ENCODE measurements at regions of chr1 and their contacts with region 1.

Region 1: DNA sequence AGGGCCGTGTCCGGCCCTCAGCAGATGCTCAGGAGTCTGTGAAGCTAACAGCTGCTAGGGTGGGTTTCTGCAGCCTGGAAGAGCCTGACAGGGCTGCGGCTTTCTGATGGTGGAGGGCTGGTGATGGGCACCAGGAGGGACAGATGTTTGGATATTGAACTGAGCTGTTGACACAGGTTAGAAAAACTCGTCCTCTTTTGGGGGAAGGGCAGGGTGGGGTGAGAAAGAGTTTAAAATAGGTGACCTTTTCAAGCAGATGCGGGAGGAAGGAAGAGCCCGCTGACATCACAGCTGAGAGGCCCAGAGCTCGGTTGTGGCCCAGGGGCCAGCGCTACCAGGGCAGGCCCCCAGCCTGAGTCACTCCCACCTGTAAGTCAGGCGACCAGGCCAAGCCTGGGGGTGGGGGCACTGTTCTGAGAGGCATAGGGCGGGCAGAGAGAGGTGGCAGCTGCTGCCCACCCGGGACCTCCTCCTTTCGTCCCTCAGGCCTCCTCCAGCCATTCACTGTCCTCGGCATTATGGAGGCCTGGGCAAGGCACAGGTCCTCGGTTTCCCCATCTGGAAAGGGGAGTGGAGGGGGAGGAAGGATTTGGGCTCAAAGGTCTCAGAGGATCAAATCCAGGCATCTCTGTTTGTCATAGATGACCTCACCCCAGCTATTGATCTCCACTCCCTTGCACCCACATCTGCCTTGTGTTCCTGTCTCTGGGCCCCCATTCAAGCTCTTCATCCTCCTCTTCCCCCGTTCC is 32.3 kb upstream of the ID3 start:
- DNase-seq: peak; percentile 88
- H3K4me3 Mint-ChIP-seq: peak overlapping the region; percentile 34
- H3K27ac Mint-ChIP-seq: peak overlapping the region; percentile 85
- H3K4me1 Mint-ChIP-seq: peaks cover 68% of the 10 kb centered on the region
- H3K27me3 Mint-ChIP-seq: no peaks in the 10 kb centered on the region

Region 2: GRCh38 chr1:23577056-23578004 is 14.3 kb before region 1 on chr1:
- CTCF ChIA-PET with region 1: interaction called, 6 read pairs
- intact Hi-C with region 1: loop called (anchors 1 kb)
- DNase-seq: peak; percentile 77
- H3K4me3 Mint-ChIP-seq: peak overlapping the region; percentile 32
- H3K27ac Mint-ChIP-seq: peak overlapping the region; percentile 78
- H3K4me1 Mint-ChIP-seq: peaks cover 29% of the 10 kb centered on the region
- H3K27me3 Mint-ChIP-seq: no peaks in the 10 kb centered on the region

Region 3: DNA sequence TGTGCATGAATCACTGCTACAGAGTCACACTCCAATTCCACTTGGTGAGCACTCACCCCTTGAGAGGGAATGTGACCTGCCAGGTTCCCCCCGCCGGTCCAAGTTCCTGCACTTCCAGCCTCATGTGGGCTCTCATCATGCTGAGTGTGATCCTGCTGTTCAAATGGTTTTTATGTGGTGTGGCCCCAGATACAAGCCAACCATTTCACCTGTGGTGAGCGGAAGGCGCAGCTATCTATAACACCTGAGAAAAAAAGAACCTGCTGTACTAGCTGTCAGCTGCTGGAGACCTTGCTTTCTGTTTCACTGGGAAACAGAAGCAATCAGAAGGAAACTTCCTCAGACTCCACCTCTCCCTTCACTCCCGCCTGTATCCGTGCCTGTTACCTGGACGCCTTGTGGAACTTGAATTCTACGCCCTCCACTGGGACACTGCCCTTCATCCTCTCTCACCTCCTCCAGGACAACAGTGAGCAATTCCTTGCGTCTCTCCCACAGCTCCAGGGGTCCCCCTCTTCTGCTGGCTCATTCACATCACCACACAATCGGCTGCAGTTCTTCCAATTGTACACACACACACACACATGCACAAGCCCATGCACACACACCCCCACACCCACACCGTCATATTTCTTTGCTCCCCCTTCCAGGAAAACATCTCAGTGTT is 35.6 kb after region 1 on chr1:
- CTCF ChIA-PET with region 1: interaction called, 3 read pairs
- intact Hi-C with region 1: loop called (anchors 2 kb)
- DNase-seq: peak; percentile 63
- H3K4me3 Mint-ChIP-seq: peak overlapping the region; percentile 82
- H3K27ac Mint-ChIP-seq: peak overlapping the region; percentile 83
- H3K4me1 Mint-ChIP-seq: peaks cover 53% of the 10 kb centered on the region
- H3K27me3 Mint-ChIP-seq: no peaks in the 10 kb centered on the region

Region 4: DNA sequence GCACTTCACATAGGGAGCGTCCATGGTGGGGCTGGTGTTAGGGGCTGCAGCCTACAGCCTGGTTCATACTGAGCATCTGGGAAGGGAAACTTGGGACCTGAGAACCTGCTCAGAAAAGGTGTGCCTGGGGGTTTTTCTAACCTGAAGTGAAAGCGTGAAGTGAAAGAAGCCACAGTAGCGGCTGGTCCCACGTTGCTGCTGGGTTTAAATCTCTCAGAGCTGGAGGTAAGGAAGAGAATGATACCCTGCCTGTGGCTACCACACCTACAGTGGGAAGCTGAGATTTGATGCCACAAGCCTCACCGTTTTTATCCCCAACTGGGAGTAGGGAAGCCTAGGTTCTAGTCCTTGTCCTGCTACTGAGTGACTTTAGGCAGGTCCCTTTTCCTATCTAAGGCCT is 297.4 kb after region 1 on chr1:
- CTCF ChIA-PET with region 1: no interaction called
- intact Hi-C with region 1: no loop called
- DNase-seq: no peak
- H3K4me3 Mint-ChIP-seq: no peak overlapping the region
- H3K27ac Mint-ChIP-seq: no peak overlapping the region
- H3K4me1 Mint-ChIP-seq: no peaks in the 10 kb centered on the region
- H3K27me3 Mint-ChIP-seq: no peaks in the 10 kb centered on the region

Region 5: GRCh38 chr1:23936481-23937176 is 345.0 kb after region 1 on chr1:
- CTCF ChIA-PET with region 1: no interaction called
- intact Hi-C with region 1: no loop called
- DNase-seq: no peak
- H3K4me3 Mint-ChIP-seq: no peak overlapping the region
- H3K27ac Mint-ChIP-seq: no peak overlapping the region
- H3K4me1 Mint-ChIP-seq: no peaks in the 10 kb centered on the region
- H3K27me3 Mint-ChIP-seq: no peaks in the 10 kb centered on the region